HEK293 (cell line): ENCODE measurements at regions of chr1 and their contacts with region 1.

Region 1: DNA sequence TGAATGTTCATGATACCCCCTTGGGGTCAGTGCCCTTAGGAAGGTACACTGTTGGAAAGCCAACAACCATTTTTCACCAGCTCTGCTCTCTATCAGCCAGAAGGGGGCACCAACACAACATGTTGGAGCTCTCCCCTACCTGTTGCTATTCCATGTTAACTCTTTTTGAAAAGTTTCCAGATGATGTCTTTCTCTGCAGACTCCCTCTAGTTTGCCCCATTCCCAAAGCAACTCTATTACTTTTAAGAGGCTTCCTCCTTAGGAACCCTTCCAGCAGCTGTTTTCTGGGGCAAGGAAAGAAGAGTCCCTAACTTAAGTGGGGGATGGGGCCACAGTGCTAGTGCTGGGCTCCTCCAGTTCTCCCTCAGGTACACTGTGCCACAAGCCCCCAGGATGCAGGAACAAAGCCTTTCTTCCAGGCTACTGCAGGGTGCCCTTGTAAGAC is 22.9 kb upstream of the NDC1 start:
- H3K4me3 ChIP-seq: no peak overlapping the region
- H3K27ac ChIP-seq: no peak overlapping the region
- H3K4me1 ChIP-seq: no peaks in the 10 kb centered on the region
- CTCF ChIP-seq: peak; percentile 46; the same call in 1 of the 2 replicates

Region 2: GRCh38 chr1:53847980-53848379 is 13.0 kb before region 1 on chr1:
- CTCF ChIA-PET with region 1: interaction called, 35 read pairs
- POLR2A ChIA-PET with region 1: no interaction called
- H3K4me3 ChIP-seq: no peak overlapping the region
- H3K27ac ChIP-seq: no peak overlapping the region
- H3K4me1 ChIP-seq: no peaks in the 10 kb centered on the region
- CTCF ChIP-seq: no peak

Region 3: DNA sequence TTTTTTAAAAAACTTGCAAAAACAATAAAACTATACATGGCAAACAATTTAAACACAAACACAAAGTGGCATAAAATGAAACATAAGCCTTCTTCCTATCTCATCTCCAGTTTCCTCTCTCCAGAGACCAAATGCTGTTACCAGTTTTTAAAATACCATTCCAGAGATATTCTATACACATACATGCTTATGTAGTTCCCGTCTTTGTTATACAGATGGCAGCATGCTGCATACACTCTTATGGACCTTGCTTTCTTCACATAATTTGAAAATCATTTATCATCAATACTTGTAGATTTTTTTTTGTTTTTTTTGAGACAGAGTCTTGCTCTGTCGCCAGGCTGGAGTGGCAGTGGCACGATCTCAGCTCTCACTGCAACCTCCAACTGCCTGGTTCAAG is 92.1 kb after region 1 on chr1:
- CTCF ChIA-PET with region 1: interaction called, 58 read pairs
- POLR2A ChIA-PET with region 1: no interaction called
- H3K4me3 ChIP-seq: no peak overlapping the region
- H3K27ac ChIP-seq: no peak overlapping the region
- H3K4me1 ChIP-seq: no peaks in the 10 kb centered on the region
- CTCF ChIP-seq: 0 out of 2 replicates have a peak, but pooled peaks have one; percentile 17

Region 4: GRCh38 chr1:53959664-53960250 is 98.8 kb after region 1 on chr1:
- CTCF ChIA-PET with region 1: interaction called, 58 read pairs
- POLR2A ChIA-PET with region 1: no interaction called
- H3K4me3 ChIP-seq: no peak overlapping the region
- H3K27ac ChIP-seq: no peak overlapping the region
- H3K4me1 ChIP-seq: no peaks in the 10 kb centered on the region
- CTCF ChIP-seq: peak; percentile 34; the same call in 1 of the 2 replicates

Region 5: GRCh38 chr1:53998223-53998622 is 137.2 kb after region 1 on chr1:
- CTCF ChIA-PET with region 1: no interaction called
- POLR2A ChIA-PET with region 1: no interaction called
- H3K4me3 ChIP-seq: no peak overlapping the region
- H3K27ac ChIP-seq: no peak overlapping the region
- H3K4me1 ChIP-seq: peaks cover 2% of the 10 kb centered on the region; the same call in 1 of the 2 replicates
- CTCF ChIP-seq: no peak

Region 6: GRCh38 chr1:54081306-54082270 is 220.6 kb after region 1 on chr1:
- CTCF ChIA-PET with region 1: interaction called, 20 read pairs
- POLR2A ChIA-PET with region 1: no interaction called
- H3K4me3 ChIP-seq: no peak overlapping the region
- H3K27ac ChIP-seq: no peak overlapping the region
- H3K4me1 ChIP-seq: no peaks in the 10 kb centered on the region
- CTCF ChIP-seq: peak; percentile 41; the same call in 1 of the 2 replicates